CD4-positive, alpha-beta T cell (primary cell): ENCODE measurements at regions of chr5 and their contacts with region 1.

Region 1: DNA sequence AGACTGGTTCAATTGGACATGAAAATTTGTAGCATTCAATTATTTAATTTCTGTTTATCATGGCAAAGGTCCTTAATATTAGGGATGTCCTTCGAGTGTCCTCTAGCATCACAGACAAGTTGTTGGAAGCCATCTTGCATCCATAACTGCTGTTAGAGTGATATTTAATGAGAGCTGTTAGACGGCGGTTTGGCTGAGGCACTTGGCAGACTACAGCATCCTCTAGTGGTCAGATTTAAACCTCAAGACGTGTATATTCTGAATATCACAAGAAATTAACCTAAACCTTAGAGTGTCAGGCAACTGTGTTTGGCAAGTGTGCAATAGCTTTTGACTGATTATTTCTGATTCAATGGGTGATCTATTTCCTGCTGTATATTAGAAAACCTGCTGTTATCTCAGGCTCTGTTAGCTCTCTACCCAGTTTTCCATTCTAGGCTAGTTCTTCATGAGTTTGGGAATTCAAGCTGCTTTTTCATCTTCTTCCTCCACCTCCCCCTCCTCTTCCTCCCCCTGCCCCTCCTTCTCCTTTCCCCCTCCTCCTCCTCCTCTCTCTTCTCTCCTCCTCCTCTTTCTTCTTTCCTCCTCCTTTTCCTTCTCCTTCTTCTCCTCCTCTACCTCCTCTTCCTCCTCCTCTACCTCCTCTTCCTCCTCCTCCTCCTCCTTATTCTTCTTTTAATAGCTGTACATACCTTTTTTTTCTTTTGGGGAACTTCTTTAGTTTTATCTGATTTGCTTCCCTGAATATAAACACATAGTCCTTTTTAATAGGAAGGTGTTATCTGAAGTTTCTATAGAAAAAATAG is 8.6 kb downstream of the SPINK1 start:
- DNase-seq: peak in 11 of 14 experiments; percentile 5 to 75 (median 17)
- ATAC-seq: peak; percentile 67
- H3K4me3 ChIP-seq: no peak overlapping the region
- H3K4me3 Mint-ChIP-seq: no peak overlapping the region
- H3K27ac ChIP-seq: no peak overlapping the region
- H3K27ac Mint-ChIP-seq: no peak overlapping the region
- H3K4me1 ChIP-seq: no peaks in the 10 kb centered on the region
- H3K4me1 Mint-ChIP-seq: no peaks in the 10 kb centered on the region
- H3K27me3 ChIP-seq: no peaks in the 10 kb centered on the region
- H3K27me3 Mint-ChIP-seq: peaks cover 5% of the 10 kb centered on the region
- CTCF ChIP-seq: peak; percentile 80

Region 2: DNA sequence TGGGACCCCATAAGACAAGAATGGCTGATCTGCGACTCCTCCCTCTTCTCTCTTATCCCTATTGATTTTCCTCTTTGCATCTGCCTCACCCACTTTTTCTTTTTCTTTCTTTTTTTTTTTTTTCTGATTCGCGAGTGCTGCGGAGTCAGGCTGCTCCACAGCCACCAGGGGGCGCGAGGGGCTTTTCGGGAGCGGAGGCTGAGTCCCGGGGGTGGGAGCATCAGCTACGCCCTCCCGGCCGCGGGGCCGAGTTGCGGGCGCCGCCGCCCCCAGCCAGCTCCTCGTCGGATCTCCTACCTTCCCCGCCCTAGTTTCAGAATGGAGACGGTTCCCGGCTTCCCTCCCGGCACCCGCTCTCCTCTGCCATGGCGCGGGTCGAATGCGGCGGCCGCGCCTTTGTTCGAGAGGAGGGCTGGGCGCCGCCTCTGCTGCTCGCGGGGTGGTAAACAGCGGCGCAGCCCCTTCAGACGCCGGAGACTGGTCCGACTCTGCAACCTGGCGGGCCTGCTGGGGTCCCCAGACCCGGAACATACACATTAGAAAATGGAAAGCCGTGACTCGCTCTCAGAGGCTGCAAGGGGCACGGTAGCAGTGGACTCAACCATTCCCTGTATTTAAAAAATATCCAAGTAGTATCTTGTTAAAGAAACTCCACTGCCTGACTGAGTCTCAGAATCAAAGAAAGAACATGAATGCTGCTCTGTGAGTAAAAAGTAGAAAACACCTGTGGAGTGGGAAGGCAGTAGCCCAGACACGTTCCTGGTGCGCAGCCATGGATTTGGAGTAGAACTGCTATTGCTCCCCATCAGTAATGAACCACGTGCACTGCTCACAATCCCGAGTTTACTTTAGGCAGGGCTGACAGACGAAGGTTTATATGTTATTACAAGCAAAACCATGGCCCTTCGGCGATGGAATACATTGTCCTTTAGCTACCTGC is 368.7 kb before region 1 on chr5:
- CTCF ChIA-PET with region 1: no interaction called
- POLR2A ChIA-PET with region 1: no interaction called
- intact Hi-C with region 1: loop called (anchors 1 to 2 kb)
- DNase-seq: peak; percentile 31 to 75 (median 51)
- ATAC-seq: peak; percentile 65
- H3K4me3 ChIP-seq: peak overlapping the region; percentile 49
- H3K4me3 Mint-ChIP-seq: peak overlapping the region; percentile 88
- H3K27ac ChIP-seq: no peak overlapping the region
- H3K27ac Mint-ChIP-seq: no peak overlapping the region
- H3K4me1 ChIP-seq: peaks cover 20% of the 10 kb centered on the region
- H3K4me1 Mint-ChIP-seq: peaks cover 25% of the 10 kb centered on the region
- H3K27me3 ChIP-seq: peaks cover 29 to 50% of the 10 kb centered on the region in 2 experiments
- H3K27me3 Mint-ChIP-seq: peaks cover 89% of the 10 kb centered on the region
- CTCF ChIP-seq: peak; percentile 61

Region 3: GRCh38 chr5:147628058-147628895 is 194.6 kb before region 1 on chr5:
- CTCF ChIA-PET with region 1: interaction called, 34 read pairs
- POLR2A ChIA-PET with region 1: interaction called, 8 read pairs
- intact Hi-C with region 1: loop called in 1 of 2 experiments (anchors 1 kb)
- DNase-seq: peak in 13 of 14 experiments; percentile 14 to 71 (median 33)
- ATAC-seq: peak; percentile 60
- H3K4me3 ChIP-seq: no peak overlapping the region
- H3K4me3 Mint-ChIP-seq: no peak overlapping the region
- H3K27ac ChIP-seq: no peak overlapping the region
- H3K27ac Mint-ChIP-seq: no peak overlapping the region
- H3K4me1 ChIP-seq: no peaks in the 10 kb centered on the region
- H3K4me1 Mint-ChIP-seq: no peaks in the 10 kb centered on the region
- H3K27me3 ChIP-seq: no peaks in the 10 kb centered on the region
- H3K27me3 Mint-ChIP-seq: no peaks in the 10 kb centered on the region
- CTCF ChIP-seq: peak; percentile 64

Region 4: GRCh38 chr5:147782110-147783028 is 40.5 kb before region 1 on chr5 and contains the start of gene JAKMIP2:
- CTCF ChIA-PET with region 1: interaction called, 4 read pairs
- POLR2A ChIA-PET with region 1: no interaction called
- intact Hi-C with region 1: loop called in 1 of 2 experiments (anchors 5 kb)
- DNase-seq: peak; percentile 72 to 95 (median 82)
- ATAC-seq: peak; percentile 95
- H3K4me3 ChIP-seq: peak within 1 kb of the TSS; percentile 60
- H3K4me3 Mint-ChIP-seq: peak within 1 kb of the TSS; percentile 87
- H3K27ac ChIP-seq: peak within 1 kb of the TSS in 1 of 2 donors; percentile 32
- H3K27ac Mint-ChIP-seq: peak within 1 kb of the TSS; percentile 86
- H3K4me1 ChIP-seq: peaks cover 7% of the 10 kb centered on the region
- H3K4me1 Mint-ChIP-seq: peaks cover 21% of the 10 kb centered on the region
- H3K27me3 ChIP-seq: no peaks in the 10 kb centered on the region
- H3K27me3 Mint-ChIP-seq: no peaks in the 10 kb centered on the region
- CTCF ChIP-seq: no peak
- total RNA-seq, gene JAKMIP2: 0.74 to 1.3 TPM

Region 5: GRCh38 chr5:147835386-147835798 is 12.5 kb after region 1 on chr5:
- CTCF ChIA-PET with region 1: no interaction called
- POLR2A ChIA-PET with region 1: no interaction called
- intact Hi-C with region 1: no loop called
- DNase-seq: no peak
- ATAC-seq: no peak
- H3K4me3 ChIP-seq: no peak overlapping the region
- H3K4me3 Mint-ChIP-seq: no peak overlapping the region
- H3K27ac ChIP-seq: no peak overlapping the region
- H3K27ac Mint-ChIP-seq: no peak overlapping the region
- H3K4me1 ChIP-seq: no peaks in the 10 kb centered on the region
- H3K4me1 Mint-ChIP-seq: no peaks in the 10 kb centered on the region
- H3K27me3 ChIP-seq: peaks cover 0 to 3% of the 10 kb centered on the region in 2 experiments
- H3K27me3 Mint-ChIP-seq: no peaks in the 10 kb centered on the region
- CTCF ChIP-seq: no peak

Region 6: GRCh38 chr5:147857302-147858129 is 34.6 kb after region 1 on chr5:
- CTCF ChIA-PET with region 1: no interaction called
- POLR2A ChIA-PET with region 1: no interaction called
- intact Hi-C with region 1: no loop called
- DNase-seq: peak in 10 of 14 experiments; percentile 3 to 51 (median 14)
- ATAC-seq: no peak
- H3K4me3 ChIP-seq: no peak overlapping the region
- H3K4me3 Mint-ChIP-seq: no peak overlapping the region
- H3K27ac ChIP-seq: no peak overlapping the region
- H3K27ac Mint-ChIP-seq: no peak overlapping the region
- H3K4me1 ChIP-seq: no peaks in the 10 kb centered on the region
- H3K4me1 Mint-ChIP-seq: no peaks in the 10 kb centered on the region
- H3K27me3 ChIP-seq: peaks cover 0 to under 1% of the 10 kb centered on the region in 2 experiments
- H3K27me3 Mint-ChIP-seq: no peaks in the 10 kb centered on the region
- CTCF ChIP-seq: peak; percentile 82

Region 7: DNA sequence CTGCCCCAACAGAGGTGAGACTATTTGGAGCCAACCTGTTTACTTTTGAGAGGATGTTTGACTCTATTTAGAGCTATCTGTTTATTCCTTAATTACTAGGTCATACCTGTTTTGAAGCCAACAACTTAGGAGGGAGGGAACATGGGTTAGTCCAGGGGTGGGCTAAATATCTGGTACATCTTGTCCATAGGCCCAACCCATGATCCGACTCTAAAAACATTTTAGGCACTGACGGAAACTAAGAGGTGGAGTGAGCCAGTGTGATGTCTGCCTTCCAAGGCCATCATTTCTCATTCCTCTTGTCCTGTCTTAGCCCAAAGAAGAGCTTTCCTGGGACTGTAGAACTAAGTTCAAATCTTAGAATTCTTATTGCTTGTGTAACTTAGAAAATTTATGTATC is 249.3 kb after region 1 on chr5:
- CTCF ChIA-PET with region 1: no interaction called
- POLR2A ChIA-PET with region 1: no interaction called
- intact Hi-C with region 1: no loop called
- DNase-seq: no peak
- ATAC-seq: no peak
- H3K4me3 ChIP-seq: no peak overlapping the region
- H3K4me3 Mint-ChIP-seq: no peak overlapping the region
- H3K27ac ChIP-seq: no peak overlapping the region
- H3K27ac Mint-ChIP-seq: no peak overlapping the region
- H3K4me1 ChIP-seq: no peaks in the 10 kb centered on the region
- H3K4me1 Mint-ChIP-seq: no peaks in the 10 kb centered on the region
- H3K27me3 ChIP-seq: no peaks in the 10 kb centered on the region
- H3K27me3 Mint-ChIP-seq: peaks cover 3% of the 10 kb centered on the region
- CTCF ChIP-seq: no peak